PC-3 (cell line): ENCODE measurements at regions of chr7 and their contacts with region 1.

Region 1: GRCh38 chr7:122902751-122903495 is 16.7 kb upstream of the CADPS2 start:
- DNase-seq: peak; percentile 67
- ATAC-seq: peak; percentile 73
- H3K4me3 ChIP-seq: no peak overlapping the region
- H3K27ac ChIP-seq: peak overlapping the region; percentile 63
- H3K4me1 ChIP-seq: 0 out of 2 replicates have a peak, but pooled peaks cover 8% of the 10 kb centered on the region
- H3K27me3 ChIP-seq: no peaks in the 10 kb centered on the region
- CTCF ChIP-seq: peak; percentile 50; the same call in 1 of the 2 replicates

Region 2: GRCh38 chr7:122970740-122971722 is 68.1 kb after region 1 on chr7:
- CTCF ChIA-PET with region 1: no interaction called
- POLR2A ChIA-PET with region 1: no interaction called
- intact Hi-C with region 1: loop called (anchors 5 kb)
- DNase-seq: peak; percentile 35
- ATAC-seq: peak; percentile 90
- H3K4me3 ChIP-seq: no peak overlapping the region
- H3K27ac ChIP-seq: peak overlapping the region; percentile 23; the same call in 1 of the 2 replicates
- H3K4me1 ChIP-seq: no peaks in the 10 kb centered on the region
- H3K27me3 ChIP-seq: no peaks in the 10 kb centered on the region
- CTCF ChIP-seq: no peak

Region 3: GRCh38 chr7:123070702-123071286 is 167.9 kb after region 1 on chr7:
- CTCF ChIA-PET with region 1: no interaction called
- POLR2A ChIA-PET with region 1: no interaction called
- intact Hi-C with region 1: loop called (anchors 5 kb)
- DNase-seq: peak; percentile 49
- ATAC-seq: peak; percentile 43
- H3K4me3 ChIP-seq: no peak overlapping the region
- H3K27ac ChIP-seq: no peak overlapping the region
- H3K4me1 ChIP-seq: no peaks in the 10 kb centered on the region
- H3K27me3 ChIP-seq: peaks cover 14% of the 10 kb centered on the region; the same call in 1 of the 2 replicates
- CTCF ChIP-seq: peak; percentile 72